ENCODE measurements at regions of chr12 and their contacts with region 1.

Region 1: DNA sequence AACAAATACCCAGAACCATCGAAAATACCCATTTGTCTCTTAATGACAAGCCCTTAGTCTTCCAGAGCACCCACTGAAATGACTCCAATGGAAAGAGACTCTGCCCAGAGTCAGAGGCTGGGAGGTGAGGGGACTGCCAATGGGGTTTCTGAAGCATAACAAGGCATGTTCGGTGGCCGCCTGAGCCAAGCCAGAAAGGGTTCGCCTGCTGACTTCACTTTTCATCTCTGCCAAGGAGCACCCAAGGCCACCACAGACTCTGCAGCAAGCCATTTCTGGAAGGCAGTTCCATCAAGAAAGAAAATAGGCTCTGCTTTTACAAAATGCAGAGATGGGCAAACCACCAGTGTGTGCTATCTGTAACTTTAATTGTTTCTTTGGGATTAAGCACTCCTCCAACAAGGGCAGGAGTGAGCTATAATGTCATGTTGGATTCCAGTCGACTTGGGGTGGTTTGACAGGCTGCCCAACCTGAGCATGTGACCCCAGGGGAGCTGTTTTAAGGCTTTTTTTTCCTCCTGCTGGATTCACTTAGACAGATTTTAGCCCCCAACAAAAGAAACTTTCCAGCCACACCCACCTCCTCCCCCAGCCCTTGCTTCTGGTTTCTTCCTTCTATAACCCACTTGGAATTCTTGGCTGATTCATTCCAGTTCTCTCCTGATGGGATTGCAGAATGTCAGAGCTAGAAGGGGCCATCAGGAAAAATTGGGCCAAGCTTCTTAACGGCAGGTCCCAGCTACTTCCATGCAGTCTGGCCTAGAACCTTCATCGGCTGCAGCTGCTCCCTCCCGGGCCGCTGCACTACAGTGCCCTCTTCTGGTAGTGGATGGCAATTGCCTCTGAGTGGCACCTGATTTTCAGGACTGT is 24.1 kb downstream of the CKAP4 start:
- DNase-seq: peak; percentile 79
- ATAC-seq: peak; percentile 73
- H3K4me3 ChIP-seq: no peak overlapping the region
- H3K4me3 Mint-ChIP-seq: no peak overlapping the region
- H3K27ac ChIP-seq: no peak overlapping the region
- H3K27ac Mint-ChIP-seq: no peak overlapping the region
- H3K4me1 ChIP-seq: peaks cover 12 to 16% of the 10 kb centered on the region in 2 donors
- H3K4me1 Mint-ChIP-seq: peaks cover 24% of the 10 kb centered on the region
- H3K27me3 ChIP-seq: peaks cover 0 to 17% (median 12%) of the 10 kb centered on the region in 4 experiments
- H3K27me3 Mint-ChIP-seq: peaks cover 16% of the 10 kb centered on the region
- CTCF ChIP-seq: peak; percentile 86

Region 2: DNA sequence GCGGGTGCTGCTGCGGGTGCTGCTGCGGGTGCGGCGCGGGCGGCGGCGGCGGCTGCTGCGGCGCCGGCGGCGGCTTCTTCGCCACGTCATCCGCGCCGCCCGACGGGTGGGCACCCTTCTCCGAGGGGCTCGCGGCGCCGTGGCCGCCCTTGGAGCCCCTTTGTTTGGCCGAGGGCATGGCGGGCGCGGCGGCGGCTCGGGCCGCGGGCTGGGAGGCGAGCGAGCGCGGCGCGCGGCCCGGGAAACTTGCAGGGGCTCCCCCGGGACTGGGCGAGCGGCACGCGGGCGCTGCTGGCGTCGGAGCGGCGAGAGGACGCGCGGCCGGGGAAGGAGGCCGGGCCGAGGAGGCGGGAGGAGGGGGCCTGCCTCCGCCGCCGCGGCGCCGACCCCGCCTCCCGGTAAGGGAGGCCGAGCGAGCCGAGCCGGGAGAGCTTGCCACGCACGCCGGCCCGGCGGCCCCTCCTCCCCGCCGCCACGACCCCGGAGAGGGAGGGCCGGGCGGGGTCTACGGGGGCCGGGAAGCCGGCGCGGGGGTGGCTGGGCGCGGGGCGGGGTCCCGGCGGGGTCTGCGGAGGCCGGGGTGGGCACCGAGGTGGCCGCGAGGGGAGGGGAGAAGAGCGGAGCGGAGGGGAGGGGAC is 24.1 kb after region 1 on chr12 and contains the start of gene CKAP4:
- CTCF ChIA-PET with region 1: interaction called, 14 read pairs
- POLR2A ChIA-PET with region 1: interaction called, 6 read pairs
- intact Hi-C with region 1: loop called (anchors 1 kb)
- DNase-seq: peak; percentile 80
- ATAC-seq: peak; percentile 61
- H3K4me3 ChIP-seq: peak within 1 kb of the TSS; percentile 53 to 77 (median 71)
- H3K4me3 Mint-ChIP-seq: peak within 1 kb of the TSS; percentile 85
- H3K27ac ChIP-seq: peak within 1 kb of the TSS; percentile 73 to 85
- H3K27ac Mint-ChIP-seq: peak within 1 kb of the TSS; percentile 88
- H3K4me1 ChIP-seq: peaks cover 36 to 52% of the 10 kb centered on the region in 2 donors
- H3K4me1 Mint-ChIP-seq: peaks cover 58% of the 10 kb centered on the region
- H3K27me3 ChIP-seq: peaks cover 0 to 16% (median 4%) of the 10 kb centered on the region in 4 experiments
- H3K27me3 Mint-ChIP-seq: no peaks in the 10 kb centered on the region
- CTCF ChIP-seq: no peak
- total RNA-seq, gene CKAP4: 27.3 and 29.2 TPM in 2 replicates

Region 3: DNA sequence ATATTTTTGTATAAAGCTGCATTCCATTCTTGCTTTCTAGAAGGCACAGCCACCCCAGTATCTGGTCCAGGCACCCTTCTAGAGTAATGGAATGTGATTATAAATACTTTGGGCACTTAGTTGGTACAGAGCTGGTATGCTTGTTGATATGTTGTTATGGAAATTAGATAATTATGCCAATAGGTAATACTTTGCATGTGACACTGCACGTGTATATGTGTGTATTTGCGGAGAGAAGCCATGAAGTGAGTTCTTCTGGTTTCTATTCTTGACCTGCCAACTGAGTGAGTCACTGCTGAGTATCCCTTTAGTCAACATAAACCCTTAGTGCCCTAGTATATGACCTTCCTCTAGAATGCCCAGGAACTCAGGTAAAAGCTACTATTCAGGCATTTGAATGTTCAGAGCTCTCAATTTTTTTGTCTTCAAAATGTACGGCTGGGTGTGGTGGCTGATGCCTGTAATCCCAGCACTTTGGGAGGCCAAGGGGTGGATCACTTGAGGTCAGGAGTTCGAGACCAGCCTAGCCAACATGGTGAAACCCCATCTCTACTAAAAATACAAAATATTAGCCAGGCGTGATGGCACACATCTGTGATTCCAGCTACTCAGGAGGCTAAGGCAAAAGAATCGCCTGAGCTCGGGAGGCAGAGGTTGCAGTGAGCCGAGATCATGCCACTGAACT is 72.6 kb after region 1 on chr12:
- CTCF ChIA-PET with region 1: interaction called, 85 read pairs
- POLR2A ChIA-PET with region 1: interaction called, 26 read pairs
- intact Hi-C with region 1: loop called (anchors 1 kb)
- DNase-seq: no peak
- ATAC-seq: no peak
- H3K4me3 ChIP-seq: no peak overlapping the region
- H3K4me3 Mint-ChIP-seq: no peak overlapping the region
- H3K27ac ChIP-seq: no peak overlapping the region
- H3K27ac Mint-ChIP-seq: no peak overlapping the region
- H3K4me1 ChIP-seq: peaks cover 14 to 17% of the 10 kb centered on the region in 2 donors
- H3K4me1 Mint-ChIP-seq: peaks cover 33% of the 10 kb centered on the region
- H3K27me3 ChIP-seq: no peaks in the 10 kb centered on the region
- H3K27me3 Mint-ChIP-seq: no peaks in the 10 kb centered on the region
- CTCF ChIP-seq: no peak

Region 4: GRCh38 chr12:106309671-106310505 is 86.2 kb after region 1 on chr12:
- CTCF ChIA-PET with region 1: interaction called, 85 read pairs
- POLR2A ChIA-PET with region 1: interaction called, 26 read pairs
- intact Hi-C with region 1: no loop called
- DNase-seq: no peak
- ATAC-seq: no peak
- H3K4me3 ChIP-seq: no peak overlapping the region
- H3K4me3 Mint-ChIP-seq: no peak overlapping the region
- H3K27ac ChIP-seq: no peak overlapping the region
- H3K27ac Mint-ChIP-seq: peak overlapping the region; percentile 34
- H3K4me1 ChIP-seq: peaks cover 24 to 31% of the 10 kb centered on the region in 2 donors
- H3K4me1 Mint-ChIP-seq: peaks cover 62% of the 10 kb centered on the region
- H3K27me3 ChIP-seq: no peaks in the 10 kb centered on the region
- H3K27me3 Mint-ChIP-seq: no peaks in the 10 kb centered on the region
- CTCF ChIP-seq: no peak

Region 5: DNA sequence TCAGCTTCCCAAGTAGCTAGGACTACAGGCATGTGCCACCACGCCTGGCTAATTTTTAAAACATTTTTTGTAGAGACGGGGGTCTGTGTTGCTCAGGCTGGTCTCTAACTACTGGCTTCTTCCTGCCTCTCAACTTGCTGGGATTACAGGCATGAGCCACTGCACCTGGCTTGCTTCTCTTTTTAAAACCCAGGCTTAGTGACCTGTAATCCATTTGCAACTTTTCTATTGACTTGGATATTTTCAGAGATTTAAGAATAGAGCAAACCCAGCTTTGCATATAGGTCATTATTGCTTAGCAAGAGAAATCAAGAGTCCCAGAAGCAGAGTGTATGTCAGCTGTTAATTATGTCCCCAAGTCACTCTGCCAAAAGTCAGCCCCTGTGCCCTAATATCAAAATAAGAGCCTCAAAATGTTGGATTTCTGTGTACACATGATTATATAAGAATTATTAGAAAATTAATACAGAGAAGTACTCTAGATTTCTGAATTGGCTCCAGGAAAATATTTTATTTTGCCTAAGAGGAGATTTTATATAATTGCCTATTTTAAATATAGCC is 103.7 kb after region 1 on chr12:
- CTCF ChIA-PET with region 1: interaction called, 14 read pairs
- POLR2A ChIA-PET with region 1: no interaction called
- intact Hi-C with region 1: no loop called
- DNase-seq: no peak
- ATAC-seq: no peak
- H3K4me3 ChIP-seq: no peak overlapping the region
- H3K4me3 Mint-ChIP-seq: no peak overlapping the region
- H3K27ac ChIP-seq: no peak overlapping the region
- H3K27ac Mint-ChIP-seq: no peak overlapping the region
- H3K4me1 ChIP-seq: no peaks in the 10 kb centered on the region
- H3K4me1 Mint-ChIP-seq: peaks cover 3% of the 10 kb centered on the region
- H3K27me3 ChIP-seq: no peaks in the 10 kb centered on the region
- H3K27me3 Mint-ChIP-seq: no peaks in the 10 kb centered on the region
- CTCF ChIP-seq: no peak

Region 6: GRCh38 chr12:106357549-106358395 is 134.1 kb after region 1 on chr12 and contains the start of gene POLR3B:
- CTCF ChIA-PET with region 1: interaction called, 29 read pairs
- POLR2A ChIA-PET with region 1: no interaction called
- intact Hi-C with region 1: loop called (anchors 1 kb)
- DNase-seq: peak; percentile 98
- ATAC-seq: peak; percentile 90
- H3K4me3 ChIP-seq: peak within 1 kb of the TSS; percentile 59 to 93 (median 85)
- H3K4me3 Mint-ChIP-seq: peak within 1 kb of the TSS; percentile 98
- H3K27ac ChIP-seq: peak within 1 kb of the TSS; percentile 67 to 80
- H3K27ac Mint-ChIP-seq: peak within 1 kb of the TSS; percentile 97
- H3K4me1 ChIP-seq: peaks cover 11 to 12% of the 10 kb centered on the region in 2 donors
- H3K4me1 Mint-ChIP-seq: peaks cover 16% of the 10 kb centered on the region
- H3K27me3 ChIP-seq: no peaks in the 10 kb centered on the region
- H3K27me3 Mint-ChIP-seq: peaks cover 2% of the 10 kb centered on the region
- CTCF ChIP-seq: peak; percentile 84
- total RNA-seq, gene POLR3B: 5.9 and 9.7 TPM in 2 replicates